Activated B cell treated with CpG ODN at 0.5 μM for 24 hours (primary cell): ENCODE measurements at regions of chr6 and their contacts with region 1.

Region 1: DNA sequence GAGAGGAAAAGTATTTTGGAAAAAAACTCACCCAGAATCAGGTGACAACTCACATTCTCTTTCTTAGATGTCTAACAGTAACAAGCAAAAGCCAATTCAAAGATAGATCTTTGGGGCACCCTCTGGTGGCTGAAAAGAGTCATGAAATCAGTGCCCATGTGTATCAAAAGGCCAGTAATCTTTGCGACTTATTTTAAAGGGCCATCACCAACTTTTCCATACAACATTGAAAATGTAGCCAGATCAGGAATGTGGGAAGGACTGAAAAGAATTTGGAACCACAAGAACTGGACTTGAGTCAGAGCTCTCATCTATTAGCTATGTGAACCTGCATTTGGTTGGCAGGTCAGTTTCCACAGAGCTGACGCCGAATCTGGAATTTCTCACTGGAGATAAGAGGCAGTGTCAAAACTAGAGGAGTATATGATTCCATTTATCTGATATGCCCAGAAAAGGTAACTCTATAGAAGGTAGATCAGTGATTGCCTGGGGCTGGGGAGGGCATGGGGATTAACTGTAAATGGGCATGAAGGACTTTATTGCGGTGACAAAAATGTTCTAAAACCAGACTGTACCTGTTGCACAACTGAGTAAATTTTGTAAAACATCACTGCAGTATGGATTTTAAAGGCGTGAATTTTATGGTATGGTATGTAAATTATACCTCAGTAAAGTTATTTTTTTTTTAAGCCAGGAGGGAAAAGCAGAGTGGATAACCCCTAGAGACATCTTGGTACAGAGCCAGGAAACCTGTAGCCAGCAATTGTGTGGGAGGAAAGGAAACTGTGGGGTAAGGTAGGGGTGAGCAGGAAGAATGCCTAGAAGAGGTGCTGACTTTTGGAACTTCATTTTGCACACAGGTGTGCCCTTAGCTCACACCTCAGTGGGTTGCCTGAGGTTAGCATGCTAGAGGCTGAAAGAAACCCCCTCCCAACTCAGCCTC is 117.1 kb upstream of the ASF1A start:
- DNase-seq: no peak
- ATAC-seq: peak; percentile 82
- H3K4me3 Mint-ChIP-seq: no peak overlapping the region
- H3K27ac Mint-ChIP-seq: no peak overlapping the region
- H3K4me1 Mint-ChIP-seq: peaks cover 5% of the 10 kb centered on the region
- H3K27me3 Mint-ChIP-seq: peaks cover 3% of the 10 kb centered on the region
- CTCF ChIP-seq: peak; percentile 73

Region 2: DNA sequence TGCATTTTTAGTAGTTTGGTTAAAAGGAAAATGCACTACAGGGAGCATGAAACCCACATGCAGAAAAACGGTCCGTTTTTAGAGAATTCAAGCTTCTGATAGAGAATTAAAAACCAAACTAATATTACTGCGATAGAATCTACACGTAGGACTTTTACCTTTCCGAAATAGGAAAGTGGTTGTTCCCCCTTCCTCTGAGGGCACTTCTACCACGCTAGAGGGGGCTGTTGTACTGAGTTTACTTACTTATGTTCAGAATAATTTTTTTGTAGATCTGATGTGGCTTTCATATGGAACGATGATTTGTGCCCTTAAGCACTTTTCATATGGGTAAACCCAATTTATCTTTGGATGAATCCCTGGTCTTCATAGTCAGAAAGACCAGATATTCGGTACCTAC is 493.1 kb before region 1 on chr6:
- CTCF ChIA-PET with region 1: no interaction called
- POLR2A ChIA-PET with region 1: no interaction called
- intact Hi-C with region 1: loop called (anchors 2 kb)
- DNase-seq: no peak
- ATAC-seq: no peak
- H3K4me3 Mint-ChIP-seq: no peak overlapping the region
- H3K27ac Mint-ChIP-seq: no peak overlapping the region
- H3K4me1 Mint-ChIP-seq: no peaks in the 10 kb centered on the region
- H3K27me3 Mint-ChIP-seq: peaks cover 17% of the 10 kb centered on the region
- CTCF ChIP-seq: no peak

Region 3: DNA sequence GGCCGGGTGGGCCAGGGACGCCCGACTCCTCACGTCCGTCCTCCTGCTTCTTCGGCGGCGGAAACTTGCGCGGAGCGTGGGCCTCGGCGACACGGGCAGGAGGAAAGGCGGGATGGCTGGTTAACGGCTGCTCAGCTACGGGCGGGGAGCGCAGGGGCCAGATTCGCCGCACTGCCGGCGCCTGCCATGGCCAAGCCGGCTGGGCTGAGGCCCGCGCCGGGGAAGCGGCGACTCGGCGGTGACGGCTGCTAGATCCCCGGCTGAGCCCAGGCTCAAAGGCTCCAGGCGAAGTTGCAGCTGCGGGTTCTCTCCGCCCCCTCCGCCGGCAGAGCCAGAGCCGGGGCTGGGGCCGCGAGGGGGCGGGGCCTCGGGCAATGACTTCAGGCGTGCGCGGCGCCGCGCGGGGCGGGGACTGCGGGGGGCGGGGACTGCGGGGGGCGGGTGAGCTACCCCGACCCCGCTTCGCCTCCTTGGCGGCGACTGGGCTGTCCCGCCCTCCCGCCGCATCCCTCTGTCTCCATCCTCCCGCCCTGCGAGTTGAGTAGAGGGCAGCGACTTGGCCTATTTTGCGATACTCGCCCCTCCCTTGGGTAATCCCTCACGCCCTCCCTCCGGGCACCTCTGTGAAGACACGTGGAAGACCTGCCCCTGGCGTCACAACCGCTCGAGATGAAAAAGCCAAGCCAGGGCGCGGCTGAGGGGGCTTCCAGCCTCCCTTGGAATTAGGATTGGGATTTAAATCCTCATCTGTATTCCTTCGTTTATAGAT is 125.4 kb before region 1 on chr6 and contains the start of gene CEP85L:
- CTCF ChIA-PET with region 1: no interaction called
- POLR2A ChIA-PET with region 1: no interaction called
- intact Hi-C with region 1: loop called (anchors 1 kb)
- DNase-seq: peak; percentile 85
- ATAC-seq: peak; percentile 91
- H3K4me3 Mint-ChIP-seq: peak within 1 kb of the TSS; percentile 98
- H3K27ac Mint-ChIP-seq: peak within 1 kb of the TSS; percentile 93
- H3K4me1 Mint-ChIP-seq: peaks cover 22% of the 10 kb centered on the region
- H3K27me3 Mint-ChIP-seq: no peaks in the 10 kb centered on the region
- CTCF ChIP-seq: no peak
- total RNA-seq, gene CEP85L: 14.6 and 21.8 TPM in 2 replicates

Region 4: DNA sequence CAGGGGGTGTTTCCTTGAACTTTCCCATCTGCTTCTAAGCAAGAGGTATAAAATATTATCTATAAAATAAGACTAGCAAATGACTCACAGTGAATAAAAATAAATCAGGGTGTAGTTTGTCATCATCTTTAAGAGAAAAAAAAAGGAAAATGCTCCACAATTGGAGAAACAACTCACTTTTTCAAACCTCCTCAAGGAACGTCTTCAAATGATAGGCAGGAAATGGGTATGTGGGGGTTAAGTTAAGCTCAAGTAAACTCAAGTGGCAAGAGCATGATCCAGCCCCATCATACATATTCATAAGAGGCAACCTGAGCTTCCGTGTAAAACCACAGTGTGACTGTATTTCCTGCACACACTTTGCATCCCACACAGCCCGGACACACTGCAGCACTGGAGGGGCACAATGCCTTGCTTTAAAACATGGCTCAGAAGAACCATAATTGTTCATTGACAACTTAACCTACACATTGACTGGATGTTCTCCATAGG is 67.0 kb before region 1 on chr6:
- CTCF ChIA-PET with region 1: interaction called, 3 read pairs
- POLR2A ChIA-PET with region 1: no interaction called
- intact Hi-C with region 1: loop called (anchors 1 kb)
- DNase-seq: no peak
- ATAC-seq: peak; percentile 92
- H3K4me3 Mint-ChIP-seq: peak overlapping the region; percentile 95
- H3K27ac Mint-ChIP-seq: peak overlapping the region; percentile 98
- H3K4me1 Mint-ChIP-seq: peaks cover 62% of the 10 kb centered on the region
- H3K27me3 Mint-ChIP-seq: no peaks in the 10 kb centered on the region
- CTCF ChIP-seq: no peak

Region 5: GRCh38 chr6:118735320-118735719 is 41.6 kb before region 1 on chr6:
- CTCF ChIA-PET with region 1: no interaction called
- POLR2A ChIA-PET with region 1: no interaction called
- intact Hi-C with region 1: no loop called
- DNase-seq: no peak
- ATAC-seq: peak; percentile 49
- H3K4me3 Mint-ChIP-seq: no peak overlapping the region
- H3K27ac Mint-ChIP-seq: no peak overlapping the region
- H3K4me1 Mint-ChIP-seq: peaks cover 3% of the 10 kb centered on the region
- H3K27me3 Mint-ChIP-seq: no peaks in the 10 kb centered on the region
- CTCF ChIP-seq: no peak

Region 6: GRCh38 chr6:119110601-119111548 is 334.0 kb after region 1 on chr6:
- CTCF ChIA-PET with region 1: interaction called, 5 read pairs
- POLR2A ChIA-PET with region 1: no interaction called
- intact Hi-C with region 1: loop called (anchors 1 kb)
- DNase-seq: no peak
- ATAC-seq: peak; percentile 42
- H3K4me3 Mint-ChIP-seq: no peak overlapping the region
- H3K27ac Mint-ChIP-seq: no peak overlapping the region
- H3K4me1 Mint-ChIP-seq: no peaks in the 10 kb centered on the region
- H3K27me3 Mint-ChIP-seq: peaks cover 3% of the 10 kb centered on the region
- CTCF ChIP-seq: no peak